H1 (cell line): ENCODE measurements at regions of chr2 and their contacts with region 1.

Region 1: DNA sequence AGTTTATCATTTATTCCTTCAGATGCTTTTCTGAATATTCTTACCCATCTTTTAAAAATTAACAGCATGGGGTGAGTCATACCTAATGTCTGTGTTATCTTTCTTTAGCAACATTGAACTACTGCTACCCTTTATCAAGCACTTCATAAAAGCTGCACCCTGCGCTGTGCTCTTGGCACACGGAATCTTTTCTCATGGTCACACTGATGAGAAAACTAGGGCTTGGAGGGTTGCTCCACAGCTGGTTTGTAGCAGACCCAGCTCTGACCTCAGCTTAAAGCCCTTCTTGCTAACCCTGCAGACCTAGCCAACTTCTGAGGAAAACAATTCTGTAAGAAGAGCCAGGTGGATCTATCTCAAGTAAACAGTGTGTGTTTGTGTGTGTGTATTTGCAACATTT is 106.3 kb downstream of the RNF144A start:
- DNase-seq: no peak
- H3K4me3 ChIP-seq: no peak overlapping the region
- H3K27ac ChIP-seq: no peak overlapping the region
- H3K4me1 ChIP-seq: no peaks in the 10 kb centered on the region
- H3K27me3 ChIP-seq: no peaks in the 10 kb centered on the region
- CTCF ChIP-seq: no peak
- EP300 ChIP-seq: no peak
- POLR2A ChIP-seq: no peak
- RAD21 ChIP-seq: no peak

Region 2: GRCh38 chr2:7037340-7038333 is 14.1 kb after region 1 on chr2:
- CTCF ChIA-PET with region 1: interaction called, 115 read pairs
- POLR2A ChIA-PET with region 1: no interaction called
- DNase-seq: peak in 1 of 2 experiments; percentile 81
- H3K4me3 ChIP-seq: no peak overlapping the region
- H3K27ac ChIP-seq: no peak overlapping the region
- H3K4me1 ChIP-seq: no peaks in the 10 kb centered on the region
- H3K27me3 ChIP-seq: no peaks in the 10 kb centered on the region
- CTCF ChIP-seq: peak; percentile 85 to 94 (median 91)
- EP300 ChIP-seq: no peak
- POLR2A ChIP-seq: no peak
- RAD21 ChIP-seq: peak; percentile 80 to 83

Region 3: GRCh38 chr2:7102826-7103225 is 79.3 kb after region 1 on chr2:
- CTCF ChIA-PET with region 1: no interaction called
- POLR2A ChIA-PET with region 1: no interaction called
- DNase-seq: no peak
- H3K4me3 ChIP-seq: no peak overlapping the region
- H3K27ac ChIP-seq: no peak overlapping the region
- H3K4me1 ChIP-seq: no peaks in the 10 kb centered on the region
- H3K27me3 ChIP-seq: no peaks in the 10 kb centered on the region; a peak in 1 of 7 replicates
- CTCF ChIP-seq: no peak
- EP300 ChIP-seq: no peak
- POLR2A ChIP-seq: no peak
- RAD21 ChIP-seq: no peak